Calu3 (cell line): ENCODE measurements at regions of chr3 and their contacts with region 1.

Region 1: GRCh38 chr3:100041328-100041749 is 73.0 kb downstream of the FILIP1L start:
- DNase-seq: no peak
- H3K4me3 Mint-ChIP-seq: no peak overlapping the region
- H3K27ac Mint-ChIP-seq: peak overlapping the region; percentile 97
- H3K4me1 Mint-ChIP-seq: peaks cover 68% of the 10 kb centered on the region
- H3K27me3 Mint-ChIP-seq: no peaks in the 10 kb centered on the region
- CTCF ChIP-seq: no peak

Region 2: GRCh38 chr3:100024520-100025303 is 16.6 kb before region 1 on chr3:
- CTCF ChIA-PET with region 1: interaction called, 10 read pairs
- intact Hi-C with region 1: no loop called
- DNase-seq: peak; percentile 33
- H3K4me3 Mint-ChIP-seq: peak overlapping the region; percentile 34
- H3K27ac Mint-ChIP-seq: no peak overlapping the region
- H3K4me1 Mint-ChIP-seq: peaks cover 19% of the 10 kb centered on the region
- H3K27me3 Mint-ChIP-seq: no peaks in the 10 kb centered on the region
- CTCF ChIP-seq: no peak

Region 3: GRCh38 chr3:100089812-100090668 is 48.7 kb after region 1 on chr3:
- CTCF ChIA-PET with region 1: no interaction called
- intact Hi-C with region 1: no loop called
- DNase-seq: peak; percentile 49
- H3K4me3 Mint-ChIP-seq: no peak overlapping the region
- H3K27ac Mint-ChIP-seq: no peak overlapping the region
- H3K4me1 Mint-ChIP-seq: peaks cover 23% of the 10 kb centered on the region
- H3K27me3 Mint-ChIP-seq: no peaks in the 10 kb centered on the region
- CTCF ChIP-seq: peak; percentile 33